ENCODE measurements at regions of chr6 and their contacts with region 1.

Region 1: GRCh38 chr6:105733565-105734162 is 330.8 kb upstream of the PREP start:
- DNase-seq: no peak
- ATAC-seq: no peak

Region 2: GRCh38 chr6:105509506-105510331 is 223.9 kb before region 1 on chr6:
- intact Hi-C with region 1: no loop called
- DNase-seq: peak; percentile 22
- ATAC-seq: peak; percentile 44 to 68

Region 3: DNA sequence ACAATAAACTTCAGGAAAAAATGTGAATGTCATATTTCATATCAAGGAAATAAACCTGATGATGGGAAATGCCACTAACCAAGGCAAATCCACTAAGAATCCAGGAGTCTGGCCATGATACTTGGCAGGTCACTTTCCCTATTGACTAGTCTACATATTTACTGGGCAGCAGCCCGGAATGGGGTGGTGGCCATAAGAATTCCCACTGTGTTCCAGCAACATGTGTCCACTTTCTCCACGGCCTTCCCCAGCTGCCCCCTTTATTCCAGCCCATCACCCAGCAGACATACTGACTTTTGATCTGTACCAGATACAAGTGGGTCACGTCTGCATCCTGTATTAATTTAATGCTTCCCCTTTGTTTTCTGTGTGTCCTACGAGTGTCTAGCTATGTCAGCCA is 117.9 kb after region 1 on chr6:
- intact Hi-C with region 1: no loop called
- DNase-seq: no peak
- ATAC-seq: no peak

Region 4: DNA sequence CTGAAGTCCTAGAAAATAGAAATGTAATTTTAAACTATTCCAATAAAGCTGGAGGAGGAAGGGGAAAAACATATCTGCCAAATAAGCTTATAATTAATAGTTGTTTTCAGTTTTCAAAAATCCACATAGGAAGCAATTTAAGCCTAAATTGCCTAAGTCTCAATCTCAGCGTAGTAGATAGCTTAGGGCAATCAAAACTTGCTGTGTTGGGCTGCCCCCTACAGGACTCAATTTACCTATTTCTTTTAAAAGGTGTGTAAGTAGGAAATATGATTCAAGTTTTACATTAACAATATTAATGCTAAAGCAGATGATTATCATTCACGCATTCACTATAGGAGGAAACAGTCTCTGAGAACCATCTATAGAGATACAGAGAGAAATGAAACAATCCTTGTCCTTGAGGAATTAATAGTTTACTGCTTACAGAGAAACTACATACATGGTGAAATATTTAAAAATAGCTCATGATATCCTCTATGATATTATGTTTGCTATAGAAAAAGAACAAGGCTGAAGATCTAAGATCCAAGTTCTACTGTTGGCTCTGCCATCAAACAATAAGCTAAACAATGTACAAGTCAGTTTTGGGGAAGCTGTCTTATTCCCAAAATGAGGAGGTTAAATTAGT is 489.8 kb after region 1 on chr6:
- intact Hi-C with region 1: loop called in 1 of 2 experiments (anchors 10 kb)
- DNase-seq: peak; percentile 43
- ATAC-seq: peak in 1 of 2 donors; percentile 57